IMR-90 (cell line): ENCODE measurements at regions of chr1 and their contacts with region 1.

Region 1: GRCh38 chr1:152001391-152002249 is 8.0 kb upstream of the S100A10 start:
- DNase-seq: peak; percentile 98
- ATAC-seq: peak; percentile 96
- H3K4me3 ChIP-seq: no peak overlapping the region
- H3K27ac ChIP-seq: peak overlapping the region; percentile 53; the same call in 1 of the 2 replicates
- H3K4me1 ChIP-seq: peaks cover 2% of the 10 kb centered on the region; the same call in 1 of the 2 replicates
- H3K27me3 ChIP-seq: peaks cover 24% of the 10 kb centered on the region
- CTCF ChIP-seq: peak; percentile 98
- POLR2A ChIP-seq: no peak
- RAD21 ChIP-seq: peak; percentile 96

Region 2: GRCh38 chr1:151888972-151889570 is 112.5 kb before region 1 on chr1:
- CTCF ChIA-PET with region 1: interaction called, 3 read pairs
- POLR2A ChIA-PET with region 1: no interaction called
- dilution Hi-C with region 1: no loop called
- in situ Hi-C with region 1: loop called (anchors 10 kb)
- intact Hi-C with region 1: loop called (anchors 1 kb)
- DNase-seq: no peak
- ATAC-seq: no peak
- H3K4me3 ChIP-seq: no peak overlapping the region
- H3K27ac ChIP-seq: no peak overlapping the region
- H3K4me1 ChIP-seq: peaks cover 2% of the 10 kb centered on the region
- H3K27me3 ChIP-seq: no peaks in the 10 kb centered on the region
- CTCF ChIP-seq: peak; percentile 45
- POLR2A ChIP-seq: no peak
- RAD21 ChIP-seq: peak; percentile 33

Region 3: DNA sequence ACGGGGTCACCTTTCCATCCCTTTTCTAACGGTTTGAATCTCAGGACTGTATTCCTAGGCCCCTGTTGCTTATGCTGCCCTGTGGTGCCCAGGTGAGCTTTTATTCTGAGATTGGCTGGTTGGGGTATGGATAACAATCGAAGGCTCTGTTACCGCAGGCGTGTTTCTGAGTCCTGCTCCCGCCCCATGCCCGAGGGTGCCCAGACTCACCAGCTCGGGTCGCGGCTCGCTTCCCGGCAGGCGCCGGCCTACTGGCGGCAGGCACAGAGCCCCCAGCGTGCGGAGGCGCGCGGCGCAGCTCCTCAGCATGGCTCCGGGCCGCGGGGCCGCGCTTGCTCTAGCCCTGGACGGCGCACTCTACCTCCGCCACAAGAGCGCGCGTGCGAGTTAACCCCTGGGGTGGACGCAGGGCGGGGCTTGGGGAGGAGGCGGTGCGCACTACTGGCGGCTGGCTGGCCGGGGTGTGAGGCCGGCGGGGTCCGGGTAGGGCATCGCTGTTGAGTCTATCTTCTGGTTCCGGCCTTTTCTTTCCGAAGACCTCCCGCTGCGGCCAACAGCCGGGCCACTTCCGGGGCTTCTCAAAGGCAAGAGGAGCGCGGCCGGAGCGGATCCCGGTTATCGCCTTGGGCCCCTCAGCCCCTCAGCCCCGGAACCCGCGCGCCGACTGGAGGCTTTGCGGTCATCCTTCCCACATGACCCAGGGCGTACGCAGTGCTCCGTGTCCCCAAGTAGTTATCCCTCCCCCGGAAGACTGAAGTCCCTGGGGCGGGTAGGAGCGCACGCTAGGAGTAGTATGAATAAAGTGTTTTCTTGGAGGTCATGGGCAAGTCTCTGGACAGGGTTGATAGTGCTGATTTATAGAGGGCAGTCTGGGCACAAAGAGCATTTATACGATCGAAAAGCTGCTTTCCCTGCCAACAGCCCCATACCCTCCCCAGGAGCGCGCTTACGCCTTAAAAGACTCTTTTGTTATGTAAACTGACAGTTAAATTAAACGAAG is 92.2 kb before region 1 on chr1 and contains the start of gene THEM4:
- CTCF ChIA-PET with region 1: interaction called, 8 read pairs
- POLR2A ChIA-PET with region 1: no interaction called
- dilution Hi-C with region 1: loop called (anchors 25 kb)
- in situ Hi-C with region 1: no loop called
- intact Hi-C with region 1: loop called (anchors 1 kb)
- DNase-seq: peak; percentile 96
- ATAC-seq: peak; percentile 100
- H3K4me3 ChIP-seq: peak within 1 kb of the TSS; percentile 77
- H3K27ac ChIP-seq: peak within 1 kb of the TSS; percentile 87
- H3K4me1 ChIP-seq: no peaks in the 10 kb centered on the region
- H3K27me3 ChIP-seq: no peaks in the 10 kb centered on the region
- CTCF ChIP-seq: peak; percentile 28; the same call in 1 of the 2 replicates
- POLR2A ChIP-seq: peak; percentile 85
- RAD21 ChIP-seq: no peak
- total RNA-seq, gene THEM4: 7.3 and 8.3 TPM in 2 replicates

Region 4: GRCh38 chr1:151934048-151934493 is 67.5 kb before region 1 on chr1:
- CTCF ChIA-PET with region 1: interaction called, 25 read pairs
- POLR2A ChIA-PET with region 1: no interaction called
- dilution Hi-C with region 1: no loop called
- in situ Hi-C with region 1: loop called (anchors 5 kb)
- intact Hi-C with region 1: loop called (anchors 1 kb)
- DNase-seq: peak; percentile 60
- ATAC-seq: peak; percentile 96
- H3K4me3 ChIP-seq: no peak overlapping the region
- H3K27ac ChIP-seq: no peak overlapping the region
- H3K4me1 ChIP-seq: no peaks in the 10 kb centered on the region
- H3K27me3 ChIP-seq: peaks cover 7% of the 10 kb centered on the region
- CTCF ChIP-seq: peak; percentile 93
- POLR2A ChIP-seq: no peak
- RAD21 ChIP-seq: peak; percentile 96

Region 5: DNA sequence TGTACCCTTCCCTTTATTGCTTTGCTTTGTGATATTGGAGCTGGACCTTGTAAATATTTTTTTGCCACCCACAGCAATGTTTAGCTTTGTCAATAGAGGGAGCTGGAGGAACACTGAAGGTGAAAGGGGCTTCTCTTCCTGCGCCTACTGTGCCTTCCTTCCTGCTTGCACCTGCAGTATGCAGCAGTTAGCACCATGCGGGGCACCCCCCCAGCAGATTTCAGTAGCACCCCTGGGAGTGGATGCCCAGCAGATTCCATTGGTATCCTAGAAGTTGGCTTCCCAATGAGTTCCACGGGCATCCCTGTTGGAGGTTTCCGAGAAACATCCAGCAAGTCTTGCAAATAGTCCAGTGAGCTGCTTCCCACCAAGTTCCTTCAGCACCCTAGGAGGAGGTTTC is 33.6 kb before region 1 on chr1:
- CTCF ChIA-PET with region 1: interaction called, 67 read pairs
- POLR2A ChIA-PET with region 1: no interaction called
- dilution Hi-C with region 1: no loop called
- in situ Hi-C with region 1: no loop called
- intact Hi-C with region 1: loop called (anchors 1 kb)
- DNase-seq: peak; percentile 41
- ATAC-seq: peak; percentile 77
- H3K4me3 ChIP-seq: no peak overlapping the region
- H3K27ac ChIP-seq: no peak overlapping the region
- H3K4me1 ChIP-seq: no peaks in the 10 kb centered on the region; the same call in 1 of the 2 replicates
- H3K27me3 ChIP-seq: no peaks in the 10 kb centered on the region
- CTCF ChIP-seq: peak; percentile 86
- POLR2A ChIP-seq: no peak
- RAD21 ChIP-seq: peak; percentile 87

Region 6: DNA sequence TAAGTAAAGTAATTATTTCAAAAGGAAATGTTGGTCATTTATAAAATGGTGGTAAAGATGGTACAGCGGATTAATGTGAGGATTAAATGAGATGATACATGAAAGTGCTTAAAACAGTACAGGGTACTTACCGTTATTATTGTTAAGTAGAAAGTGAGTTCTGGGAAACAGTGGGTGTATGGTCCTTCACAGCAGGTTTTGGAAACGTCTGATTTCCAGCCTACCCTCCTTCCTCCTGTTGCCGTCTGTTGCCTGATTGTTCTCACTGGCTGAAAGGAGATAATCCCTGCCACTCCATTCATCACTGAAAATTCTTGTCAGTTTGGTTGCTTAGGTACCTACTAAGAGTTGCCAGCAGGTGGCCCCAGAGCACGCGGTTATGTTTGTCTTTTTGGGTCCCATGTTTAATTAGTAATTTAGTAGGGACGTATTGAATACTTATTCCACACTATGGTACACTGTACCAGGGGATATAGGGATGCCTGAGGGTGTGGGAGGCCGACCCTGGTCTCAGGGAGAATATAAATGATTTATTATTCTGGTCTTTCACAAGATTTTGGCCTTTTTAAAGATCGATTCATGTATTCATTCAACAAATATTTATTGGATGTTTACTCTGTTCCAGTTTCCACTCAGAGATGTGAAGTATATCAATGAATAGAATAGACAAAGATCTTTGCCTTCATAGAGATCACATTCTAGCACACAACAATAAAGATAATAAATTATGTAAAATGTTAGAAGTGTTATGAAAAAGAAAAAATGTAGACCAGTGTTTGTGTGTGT is 188.2 kb after region 1 on chr1:
- CTCF ChIA-PET with region 1: no interaction called
- POLR2A ChIA-PET with region 1: no interaction called
- dilution Hi-C with region 1: no loop called
- in situ Hi-C with region 1: no loop called
- intact Hi-C with region 1: no loop called
- DNase-seq: peak; percentile 38
- ATAC-seq: peak; percentile 45
- H3K4me3 ChIP-seq: no peak overlapping the region
- H3K27ac ChIP-seq: no peak overlapping the region
- H3K4me1 ChIP-seq: no peaks in the 10 kb centered on the region
- H3K27me3 ChIP-seq: no peaks in the 10 kb centered on the region
- CTCF ChIP-seq: peak; percentile 60
- POLR2A ChIP-seq: no peak
- RAD21 ChIP-seq: peak; percentile 54

Region 7: GRCh38 chr1:152801333-152801732 is 799.7 kb after region 1 on chr1:
- CTCF ChIA-PET with region 1: no interaction called
- POLR2A ChIA-PET with region 1: no interaction called
- dilution Hi-C with region 1: no loop called
- in situ Hi-C with region 1: no loop called
- intact Hi-C with region 1: no loop called
- DNase-seq: no peak
- ATAC-seq: no peak
- H3K4me3 ChIP-seq: no peak overlapping the region
- H3K27ac ChIP-seq: no peak overlapping the region
- H3K4me1 ChIP-seq: no peaks in the 10 kb centered on the region
- H3K27me3 ChIP-seq: no peaks in the 10 kb centered on the region
- CTCF ChIP-seq: no peak
- POLR2A ChIP-seq: no peak
- RAD21 ChIP-seq: no peak

Region 8: DNA sequence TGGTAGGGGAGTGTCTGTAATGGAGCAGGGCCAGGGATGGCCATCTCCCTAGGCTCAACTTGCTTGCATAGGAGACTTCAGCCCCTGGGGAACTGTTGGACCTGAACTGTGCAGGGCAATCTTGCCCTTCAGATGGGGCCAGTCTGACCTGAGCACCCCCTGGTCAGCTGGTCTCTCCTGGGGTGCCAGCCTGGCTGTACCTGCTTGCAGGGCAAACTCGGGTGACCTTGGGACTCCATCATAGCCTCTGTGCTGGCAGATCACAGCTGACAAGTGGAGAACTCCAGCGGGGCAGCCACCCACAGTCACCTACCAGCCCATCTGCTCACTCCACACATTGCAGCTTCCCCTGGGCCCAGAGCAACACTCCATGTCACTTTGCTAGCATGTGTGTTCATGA is 1047.6 kb after region 1 on chr1:
- CTCF ChIA-PET with region 1: no interaction called
- POLR2A ChIA-PET with region 1: no interaction called
- dilution Hi-C with region 1: no loop called
- in situ Hi-C with region 1: no loop called
- intact Hi-C with region 1: no loop called
- DNase-seq: no peak
- ATAC-seq: no peak
- H3K4me3 ChIP-seq: no peak overlapping the region
- H3K27ac ChIP-seq: no peak overlapping the region
- H3K4me1 ChIP-seq: no peaks in the 10 kb centered on the region
- H3K27me3 ChIP-seq: no peaks in the 10 kb centered on the region
- CTCF ChIP-seq: no peak
- POLR2A ChIP-seq: no peak
- RAD21 ChIP-seq: no peak